Activated CD8-positive, alpha-beta T cell treated with anti-CD3 and anti-CD28 coated beads for 36 hours (primary cell): ENCODE measurements at regions of chr7 and their contacts with region 1.

Region 1: GRCh38 chr7:50467817-50468610 is 17.9 kb upstream of the FIGNL1 start:
- DNase-seq: peak; percentile 90
- ATAC-seq: peak; percentile 99
- H3K4me3 Mint-ChIP-seq: peak overlapping the region; percentile 52
- H3K27ac Mint-ChIP-seq: peak overlapping the region; percentile 43
- H3K4me1 Mint-ChIP-seq: peaks cover 12% of the 10 kb centered on the region
- H3K27me3 Mint-ChIP-seq: peaks cover 2% of the 10 kb centered on the region
- CTCF ChIP-seq: peak; percentile 97

Region 2: GRCh38 chr7:50119815-50120637 is 348.0 kb before region 1 on chr7:
- CTCF ChIA-PET with region 1: interaction called, 11 read pairs
- POLR2A ChIA-PET with region 1: no interaction called
- intact Hi-C with region 1: no loop called
- DNase-seq: peak; percentile 64
- ATAC-seq: peak; percentile 81
- H3K4me3 Mint-ChIP-seq: no peak overlapping the region
- H3K27ac Mint-ChIP-seq: no peak overlapping the region
- H3K4me1 Mint-ChIP-seq: no peaks in the 10 kb centered on the region
- H3K27me3 Mint-ChIP-seq: peaks cover 2% of the 10 kb centered on the region
- CTCF ChIP-seq: peak; percentile 64

Region 3: GRCh38 chr7:50307368-50308032 is 160.5 kb before region 1 on chr7:
- CTCF ChIA-PET with region 1: no interaction called
- POLR2A ChIA-PET with region 1: no interaction called
- intact Hi-C with region 1: no loop called
- DNase-seq: peak; percentile 78
- ATAC-seq: peak; percentile 29
- H3K4me3 Mint-ChIP-seq: peak overlapping the region; percentile 94
- H3K27ac Mint-ChIP-seq: peak overlapping the region; percentile 97
- H3K4me1 Mint-ChIP-seq: peaks cover 7% of the 10 kb centered on the region
- H3K27me3 Mint-ChIP-seq: no peaks in the 10 kb centered on the region
- CTCF ChIP-seq: no peak

Region 4: DNA sequence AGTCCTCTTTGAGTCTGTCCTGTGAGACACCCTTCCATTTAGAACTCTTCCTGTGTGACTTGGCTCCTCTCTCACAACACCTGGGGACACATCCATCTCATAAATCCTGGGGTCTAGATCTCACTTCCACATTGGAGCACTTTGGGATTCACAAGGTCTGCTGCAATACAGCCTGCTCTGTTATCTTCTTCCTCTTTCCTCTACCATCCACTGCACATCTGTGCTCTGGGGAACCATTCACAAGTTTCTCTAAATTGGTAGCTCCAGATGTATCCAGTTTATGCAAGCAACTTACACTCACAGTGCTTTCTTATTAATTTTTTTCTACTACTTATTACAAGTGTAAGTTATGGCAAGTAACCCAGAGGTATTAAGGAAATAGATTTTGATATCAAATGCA is 12.4 kb before region 1 on chr7:
- CTCF ChIA-PET with region 1: interaction called, 36 read pairs
- POLR2A ChIA-PET with region 1: interaction called, 6 read pairs
- intact Hi-C with region 1: no loop called
- DNase-seq: no peak
- ATAC-seq: no peak
- H3K4me3 Mint-ChIP-seq: no peak overlapping the region
- H3K27ac Mint-ChIP-seq: no peak overlapping the region
- H3K4me1 Mint-ChIP-seq: peaks cover 5% of the 10 kb centered on the region
- H3K27me3 Mint-ChIP-seq: no peaks in the 10 kb centered on the region
- CTCF ChIP-seq: no peak

Region 5: DNA sequence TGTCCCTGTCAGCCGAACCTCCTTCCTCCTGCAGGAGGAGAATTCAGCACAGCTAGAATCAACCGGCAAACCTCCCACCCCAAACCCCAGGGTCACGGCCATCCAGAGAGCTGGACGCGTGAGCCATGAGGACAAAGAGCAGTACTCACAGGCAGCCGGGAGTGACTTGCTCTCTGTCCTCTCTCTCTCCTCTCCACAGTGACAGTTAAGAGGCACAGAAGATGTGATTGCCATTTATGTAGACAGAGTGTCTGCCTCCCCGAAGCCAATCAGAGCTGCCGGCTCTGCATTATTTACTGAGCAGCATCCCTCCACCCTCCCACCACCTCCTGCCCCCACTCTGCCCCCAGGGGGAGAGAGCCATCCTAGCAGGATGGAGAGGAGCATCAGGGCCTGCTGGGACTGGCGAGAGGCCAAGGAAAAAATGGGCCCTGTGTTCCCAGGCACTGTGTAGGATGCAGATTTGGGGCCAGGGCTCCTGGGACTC is 92.9 kb after region 1 on chr7:
- CTCF ChIA-PET with region 1: no interaction called
- POLR2A ChIA-PET with region 1: no interaction called
- intact Hi-C with region 1: no loop called
- DNase-seq: no peak
- ATAC-seq: no peak
- H3K4me3 Mint-ChIP-seq: no peak overlapping the region
- H3K27ac Mint-ChIP-seq: no peak overlapping the region
- H3K4me1 Mint-ChIP-seq: no peaks in the 10 kb centered on the region
- H3K27me3 Mint-ChIP-seq: peaks cover 24% of the 10 kb centered on the region
- CTCF ChIP-seq: no peak

Region 6: GRCh38 chr7:50595491-50596102 is 127.6 kb after region 1 on chr7:
- CTCF ChIA-PET with region 1: interaction called, 22 read pairs
- POLR2A ChIA-PET with region 1: no interaction called
- intact Hi-C with region 1: no loop called
- DNase-seq: peak; percentile 32
- ATAC-seq: peak; percentile 74
- H3K4me3 Mint-ChIP-seq: no peak overlapping the region
- H3K27ac Mint-ChIP-seq: no peak overlapping the region
- H3K4me1 Mint-ChIP-seq: peaks cover 15% of the 10 kb centered on the region
- H3K27me3 Mint-ChIP-seq: no peaks in the 10 kb centered on the region
- CTCF ChIP-seq: no peak

Region 7: DNA sequence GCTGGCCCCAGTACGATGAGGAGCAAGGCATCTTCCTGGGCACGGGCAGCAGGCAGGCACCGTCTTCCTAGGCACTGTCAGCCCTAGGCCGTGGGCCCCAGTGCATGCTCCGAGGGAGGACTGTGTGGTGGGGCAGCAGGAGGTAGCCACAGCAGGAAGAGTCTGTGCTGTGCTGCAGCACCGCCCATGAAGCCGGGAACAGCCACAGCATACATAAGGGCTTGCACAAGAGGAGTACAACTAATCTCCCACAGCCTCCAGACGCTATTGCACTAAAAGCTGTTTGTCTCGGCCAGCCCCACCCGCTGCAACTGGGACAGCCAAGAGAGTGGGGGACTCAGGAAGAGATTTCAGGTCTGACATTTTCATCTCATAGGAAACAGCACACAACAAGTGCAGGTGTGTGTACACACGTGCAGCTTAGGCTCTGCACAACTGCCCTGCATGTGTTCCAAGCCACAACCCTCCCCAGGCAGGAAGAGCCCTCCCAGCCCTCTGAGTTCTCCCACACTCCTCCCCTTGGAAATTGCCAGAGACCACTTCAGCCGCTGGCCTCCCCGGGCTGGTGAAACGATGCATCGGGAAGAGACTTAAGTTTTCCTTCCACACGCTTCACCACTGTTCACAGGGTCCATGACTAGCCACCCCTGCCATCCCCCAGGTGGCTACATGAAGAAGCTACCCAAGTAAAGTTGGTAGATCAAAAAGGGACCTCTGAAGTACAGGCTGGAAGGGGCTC is 185.3 kb after region 1 on chr7:
- CTCF ChIA-PET with region 1: interaction called, 11 read pairs
- POLR2A ChIA-PET with region 1: no interaction called
- intact Hi-C with region 1: no loop called
- DNase-seq: no peak
- ATAC-seq: peak; percentile 17
- H3K4me3 Mint-ChIP-seq: no peak overlapping the region
- H3K27ac Mint-ChIP-seq: no peak overlapping the region
- H3K4me1 Mint-ChIP-seq: no peaks in the 10 kb centered on the region
- H3K27me3 Mint-ChIP-seq: no peaks in the 10 kb centered on the region
- CTCF ChIP-seq: no peak

Region 8: DNA sequence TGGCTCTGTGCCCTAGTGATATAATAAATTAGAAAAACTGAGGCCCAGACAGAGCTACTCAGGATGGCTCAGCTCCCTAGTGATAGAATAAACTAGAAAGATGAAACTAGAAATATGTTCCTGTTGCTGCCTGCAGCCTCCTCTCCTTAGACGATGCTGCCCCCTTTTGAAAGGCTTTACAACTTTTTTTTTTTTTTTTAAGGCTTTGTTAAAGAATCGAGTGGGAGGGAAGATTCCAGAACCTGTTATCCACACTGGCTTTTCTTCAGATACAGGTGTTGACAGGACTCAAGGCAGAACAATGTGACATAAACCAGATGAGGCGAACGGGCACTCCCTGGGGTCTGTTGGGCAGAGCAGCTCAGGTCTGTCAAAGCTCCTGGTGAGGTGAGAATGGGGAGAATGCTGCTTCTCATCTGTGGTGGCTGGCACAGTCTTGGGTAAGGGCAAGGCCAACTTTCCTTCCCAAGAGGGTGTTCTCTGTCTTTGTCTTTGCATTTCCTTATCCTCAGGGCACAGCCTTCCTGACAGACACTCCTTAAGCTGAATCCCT is 673.5 kb after region 1 on chr7:
- CTCF ChIA-PET with region 1: interaction called, 15 read pairs
- POLR2A ChIA-PET with region 1: no interaction called
- intact Hi-C with region 1: loop called (anchors 10 kb)
- DNase-seq: peak; percentile 16
- ATAC-seq: peak; percentile 24
- H3K4me3 Mint-ChIP-seq: no peak overlapping the region
- H3K27ac Mint-ChIP-seq: no peak overlapping the region
- H3K4me1 Mint-ChIP-seq: peaks cover 3% of the 10 kb centered on the region
- H3K27me3 Mint-ChIP-seq: no peaks in the 10 kb centered on the region
- CTCF ChIP-seq: peak; percentile 69